ENCODE measurements at regions of chr12 and their contacts with region 1.

Region 1: GRCh38 chr12:62581288-62582064 is 114.8 kb downstream of the MON2 start:
- DNase-seq: peak; percentile 27 to 63 (median 44)
- H3K4me3 ChIP-seq: no peak overlapping the region
- H3K4me3 Mint-ChIP-seq: no peak overlapping the region
- H3K27ac ChIP-seq: no peak overlapping the region
- H3K27ac Mint-ChIP-seq: peak overlapping the region in 1 of 7 donors; percentile 52
- H3K4me1 ChIP-seq: no peaks in the 10 kb centered on the region
- H3K4me1 Mint-ChIP-seq: no peaks in the 10 kb centered on the region
- H3K27me3 ChIP-seq: no peaks in the 10 kb centered on the region
- H3K27me3 Mint-ChIP-seq: peaks cover 0 to 2% (median 0%) of the 10 kb centered on the region in 3 donors
- CTCF ChIP-seq: peak; percentile 76

Region 2: DNA sequence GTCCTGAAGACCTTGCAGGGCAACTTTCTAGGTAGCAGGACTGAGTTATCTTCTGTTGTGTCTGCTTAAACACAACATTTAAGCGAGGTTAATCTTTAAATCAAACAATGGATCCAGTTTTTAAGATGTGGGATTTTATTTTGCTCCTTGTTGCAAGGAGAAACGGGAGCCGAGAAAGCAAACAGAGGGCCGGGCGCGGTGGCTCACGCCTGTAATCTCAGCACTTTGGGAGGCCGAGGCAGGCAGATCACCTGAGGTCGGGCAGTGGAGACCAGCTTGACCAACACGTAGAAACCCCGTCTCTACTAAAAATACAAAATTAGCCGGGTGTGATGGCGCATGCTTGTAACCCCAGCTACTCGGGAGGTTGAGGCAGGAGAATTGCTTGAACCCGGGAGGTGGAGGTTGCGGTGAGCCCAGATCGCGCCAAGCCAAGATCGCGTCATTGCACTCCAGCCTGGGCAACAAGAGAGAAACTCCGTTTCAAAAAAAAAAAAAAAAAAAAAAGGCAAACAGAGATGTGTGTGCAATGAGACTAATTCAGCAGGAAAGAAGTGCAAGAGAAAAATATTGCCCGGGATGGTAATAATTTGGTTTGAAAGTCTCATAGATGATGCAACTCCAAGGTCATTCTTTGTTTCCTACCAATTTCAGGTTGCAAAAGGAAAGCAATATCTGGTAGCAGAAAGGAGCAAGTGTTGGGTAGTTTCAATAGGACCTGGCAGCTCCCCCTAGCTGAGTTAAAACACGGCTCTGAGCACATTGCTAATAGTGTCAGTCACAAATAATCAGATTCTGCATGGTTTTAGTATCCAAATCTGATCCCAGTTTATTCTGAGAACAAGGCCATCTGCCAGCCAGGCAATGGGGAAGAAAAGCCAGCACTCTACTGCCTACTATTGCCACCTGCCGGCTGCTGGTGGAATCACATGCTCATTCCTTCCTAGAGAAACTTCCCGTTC is 212.1 kb after region 1 on chr12:
- intact Hi-C with region 1: loop called (anchors 5 kb)
- DNase-seq: peak; percentile 66 to 85 (median 70)
- H3K4me3 ChIP-seq: no peak overlapping the region
- H3K4me3 Mint-ChIP-seq: no peak overlapping the region
- H3K27ac ChIP-seq: no peak overlapping the region
- H3K27ac Mint-ChIP-seq: no peak overlapping the region
- H3K4me1 ChIP-seq: peaks cover 13 to 20% of the 10 kb centered on the region in 2 donors
- H3K4me1 Mint-ChIP-seq: peaks cover 25% of the 10 kb centered on the region
- H3K27me3 ChIP-seq: no peaks in the 10 kb centered on the region
- H3K27me3 Mint-ChIP-seq: peaks cover 0 to 2% (median 0%) of the 10 kb centered on the region in 3 donors
- CTCF ChIP-seq: peak; percentile 92

Region 3: GRCh38 chr12:62799126-62799736 is 217.8 kb after region 1 on chr12:
- intact Hi-C with region 1: loop called (anchors 5 kb)
- DNase-seq: peak; percentile 33 to 69 (median 61)
- H3K4me3 ChIP-seq: no peak overlapping the region
- H3K4me3 Mint-ChIP-seq: no peak overlapping the region
- H3K27ac ChIP-seq: no peak overlapping the region
- H3K27ac Mint-ChIP-seq: peak overlapping the region in 1 of 7 donors; percentile 20
- H3K4me1 ChIP-seq: peaks cover 0 to under 1% of the 10 kb centered on the region in 2 donors
- H3K4me1 Mint-ChIP-seq: no peaks in the 10 kb centered on the region
- H3K27me3 ChIP-seq: no peaks in the 10 kb centered on the region
- H3K27me3 Mint-ChIP-seq: peaks cover 0 to 2% (median 1%) of the 10 kb centered on the region in 3 donors
- CTCF ChIP-seq: peak; percentile 96